Activated naive CD4-positive, alpha-beta T cell treated with anti-CD3 and anti-CD28 coated beads for 36 hours (primary cell): ENCODE measurements at regions of chr7 and their contacts with region 1.

Region 1: DNA sequence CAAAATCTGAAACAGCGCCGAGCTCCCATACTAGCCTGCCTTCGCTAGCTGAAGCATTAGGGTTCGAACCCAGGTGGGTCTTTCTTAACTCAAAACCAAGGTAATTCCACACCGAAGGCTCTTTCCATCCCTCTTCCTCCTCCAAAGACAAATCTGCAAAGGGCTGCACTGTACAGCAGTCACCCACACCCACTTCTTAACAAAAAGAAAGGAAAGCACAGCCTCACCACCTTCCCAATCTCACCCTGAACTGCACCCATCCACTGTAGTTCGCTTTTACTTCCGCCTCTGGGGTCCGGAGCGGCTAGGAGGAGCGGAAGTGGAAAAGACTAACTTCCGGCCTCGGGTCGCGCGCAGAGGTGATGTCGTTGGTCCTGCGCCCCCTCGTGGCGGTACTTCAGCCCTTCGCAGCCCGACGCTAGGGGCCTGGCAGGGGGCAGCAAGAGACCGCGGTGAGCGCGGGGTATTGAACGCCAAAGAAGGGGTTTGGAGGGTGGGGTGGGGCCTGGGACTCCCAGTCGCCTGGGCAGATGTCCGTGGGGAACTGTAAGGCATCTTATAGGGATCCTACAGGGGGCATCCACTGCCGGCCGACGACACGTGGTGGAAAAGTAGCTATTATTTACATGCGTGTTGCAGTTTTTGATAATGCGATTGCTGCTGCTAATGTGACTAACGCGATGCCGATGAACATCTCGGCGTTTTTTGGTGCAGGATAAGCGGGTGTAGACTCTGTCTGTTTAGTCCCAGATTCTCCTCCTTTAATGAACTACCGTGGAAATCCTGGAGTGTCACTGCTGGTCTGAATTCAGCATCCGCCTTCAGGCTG is at the start of gene MTERF1:
- DNase-seq: peak; percentile 96
- H3K4me3 Mint-ChIP-seq: peak within 1 kb of the TSS; percentile 95
- H3K27ac Mint-ChIP-seq: peak within 1 kb of the TSS; percentile 94
- H3K4me1 Mint-ChIP-seq: peaks cover 21% of the 10 kb centered on the region
- H3K27me3 Mint-ChIP-seq: no peaks in the 10 kb centered on the region
- total RNA-seq, gene MTERF1: 13.7 to 16.7 TPM

Region 2: GRCh38 chr7:91264046-91264923 is 616.3 kb before region 1 on chr7 and contains the start of gene FZD1:
- CTCF ChIA-PET with region 1: no interaction called
- intact Hi-C with region 1: loop called (anchors 2 kb)
- DNase-seq: peak; percentile 85
- H3K4me3 Mint-ChIP-seq: peak within 1 kb of the TSS; percentile 82
- H3K27ac Mint-ChIP-seq: no peak within 1 kb of the TSS
- H3K4me1 Mint-ChIP-seq: peaks cover 8% of the 10 kb centered on the region
- H3K27me3 Mint-ChIP-seq: peaks cover 53% of the 10 kb centered on the region
- total RNA-seq, gene FZD1: 0.29 to 0.30 TPM

Region 3: GRCh38 chr7:91852263-91852741 is 28.3 kb before region 1 on chr7:
- CTCF ChIA-PET with region 1: no interaction called
- intact Hi-C with region 1: no loop called
- DNase-seq: no peak
- H3K4me3 Mint-ChIP-seq: no peak overlapping the region
- H3K27ac Mint-ChIP-seq: no peak overlapping the region
- H3K4me1 Mint-ChIP-seq: no peaks in the 10 kb centered on the region
- H3K27me3 Mint-ChIP-seq: no peaks in the 10 kb centered on the region

Region 4: GRCh38 chr7:91866599-91867148 is 14.0 kb before region 1 on chr7:
- CTCF ChIA-PET with region 1: interaction called, 14 read pairs
- intact Hi-C with region 1: no loop called
- DNase-seq: no peak
- H3K4me3 Mint-ChIP-seq: no peak overlapping the region
- H3K27ac Mint-ChIP-seq: no peak overlapping the region
- H3K4me1 Mint-ChIP-seq: peaks cover 4% of the 10 kb centered on the region
- H3K27me3 Mint-ChIP-seq: no peaks in the 10 kb centered on the region

Region 5: GRCh38 chr7:92134271-92135051 is 253.8 kb after region 1 on chr7 and contains the start of gene CYP51A1:
- CTCF ChIA-PET with region 1: no interaction called
- intact Hi-C with region 1: loop called (anchors 1 kb)
- DNase-seq: peak; percentile 93
- H3K4me3 Mint-ChIP-seq: peak within 1 kb of the TSS; percentile 96
- H3K27ac Mint-ChIP-seq: peak within 1 kb of the TSS; percentile 99
- H3K4me1 Mint-ChIP-seq: peaks cover 36% of the 10 kb centered on the region
- H3K27me3 Mint-ChIP-seq: no peaks in the 10 kb centered on the region
- total RNA-seq, gene CYP51A1: 52.8 to 55.5 TPM

Region 6: GRCh38 chr7:92447345-92448204 is 566.9 kb after region 1 on chr7 and contains the start of gene GATAD1:
- CTCF ChIA-PET with region 1: interaction called, 8 read pairs
- intact Hi-C with region 1: loop called (anchors 1 kb)
- DNase-seq: peak; percentile 89
- H3K4me3 Mint-ChIP-seq: peak within 1 kb of the TSS; percentile 82
- H3K27ac Mint-ChIP-seq: peak within 1 kb of the TSS; percentile 84
- H3K4me1 Mint-ChIP-seq: peaks cover 12% of the 10 kb centered on the region
- H3K27me3 Mint-ChIP-seq: no peaks in the 10 kb centered on the region
- total RNA-seq, gene GATAD1: 27.5 to 29.6 TPM

Region 7: DNA sequence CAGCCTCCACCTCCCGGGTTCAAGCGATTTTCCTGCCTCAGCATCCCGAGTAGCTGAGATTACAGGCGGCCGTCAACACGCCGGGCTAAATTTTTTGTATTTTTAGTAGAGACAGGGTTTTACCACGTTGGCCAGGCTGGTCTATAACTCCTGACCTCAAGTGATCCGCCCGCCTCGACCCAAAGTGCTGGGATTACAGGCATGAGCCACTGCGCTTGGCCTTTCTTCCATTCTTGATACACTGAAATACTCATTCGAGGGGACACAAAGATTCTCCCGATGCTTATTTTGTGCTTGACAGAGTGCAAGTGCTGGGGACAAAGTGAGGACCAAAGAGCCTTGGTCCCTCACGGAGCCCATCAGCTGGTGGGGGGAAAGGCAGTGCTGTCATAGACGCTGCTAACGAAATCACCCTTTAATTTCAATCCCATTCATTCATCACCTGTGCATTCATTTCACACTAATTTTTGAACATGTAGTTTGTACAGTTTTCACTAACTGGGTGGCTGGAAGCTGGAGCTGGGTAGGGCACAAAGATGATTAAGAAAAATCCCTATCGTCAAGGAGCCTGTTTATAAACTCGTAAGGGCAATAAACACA is 710.2 kb after region 1 on chr7:
- CTCF ChIA-PET with region 1: no interaction called
- intact Hi-C with region 1: loop called (anchors 1 kb)
- DNase-seq: no peak
- H3K4me3 Mint-ChIP-seq: peak overlapping the region; percentile 86
- H3K27ac Mint-ChIP-seq: no peak overlapping the region
- H3K4me1 Mint-ChIP-seq: peaks cover 39% of the 10 kb centered on the region
- H3K27me3 Mint-ChIP-seq: peaks cover 3% of the 10 kb centered on the region